ENCODE measurements at regions of chr19 and their contacts with region 1.

Region 1: GRCh38 chr19:2151339-2152229 is at the start of gene AP3D1:
- DNase-seq: peak; percentile 100
- H3K4me3 Mint-ChIP-seq: peak within 1 kb of the TSS; percentile 82
- H3K27ac Mint-ChIP-seq: peak within 1 kb of the TSS; percentile 82
- H3K4me1 Mint-ChIP-seq: peaks cover 43% of the 10 kb centered on the region
- H3K27me3 Mint-ChIP-seq: no peaks in the 10 kb centered on the region
- total RNA-seq, gene AP3D1: 84.6 to 89.1 TPM

Region 2: DNA sequence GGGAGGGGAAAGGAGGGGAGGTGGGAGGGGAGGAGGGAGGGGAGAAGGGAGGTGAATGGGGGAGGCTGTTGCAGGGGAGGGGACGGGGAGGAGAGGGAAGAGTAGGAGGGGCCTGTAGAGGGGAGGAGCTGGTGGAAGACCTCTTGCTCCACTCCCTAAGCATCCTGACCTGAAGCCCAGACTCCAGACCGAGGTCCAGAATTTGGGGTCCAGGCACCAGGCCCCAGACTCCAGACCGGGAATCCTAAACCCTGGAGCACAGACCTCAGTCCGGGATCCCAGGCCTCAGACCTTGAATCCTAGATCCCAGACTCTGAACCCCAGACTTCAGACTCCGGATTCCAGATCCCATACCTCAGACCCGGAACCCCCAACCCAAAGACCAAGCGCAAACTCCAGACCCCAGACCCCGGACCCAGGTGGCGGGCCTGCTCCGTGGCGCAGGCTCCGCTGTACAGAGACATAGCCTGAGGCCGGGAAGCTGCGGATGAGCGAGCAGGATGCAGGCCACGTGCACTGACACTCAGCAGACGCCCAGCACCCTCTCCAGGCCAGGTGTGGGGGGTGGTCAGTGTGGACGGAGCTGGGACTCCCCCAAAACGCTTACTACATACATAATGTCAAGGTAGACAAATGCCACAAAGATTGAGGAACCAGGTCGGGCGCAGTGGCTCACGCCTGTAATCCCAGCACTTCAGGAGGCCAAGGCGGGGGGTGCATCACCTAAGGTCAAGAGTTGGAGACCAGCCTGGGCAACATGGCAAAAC is 135.4 kb before region 1 on chr19:
- CTCF ChIA-PET with region 1: interaction called, 5 read pairs
- POLR2A ChIA-PET with region 1: no interaction called
- intact Hi-C with region 1: loop called (anchors 1 kb)
- DNase-seq: peak; percentile 82
- H3K4me3 Mint-ChIP-seq: peak overlapping the region; percentile 60
- H3K27ac Mint-ChIP-seq: peak overlapping the region; percentile 28
- H3K4me1 Mint-ChIP-seq: peaks cover 15% of the 10 kb centered on the region
- H3K27me3 Mint-ChIP-seq: no peaks in the 10 kb centered on the region

Region 3: DNA sequence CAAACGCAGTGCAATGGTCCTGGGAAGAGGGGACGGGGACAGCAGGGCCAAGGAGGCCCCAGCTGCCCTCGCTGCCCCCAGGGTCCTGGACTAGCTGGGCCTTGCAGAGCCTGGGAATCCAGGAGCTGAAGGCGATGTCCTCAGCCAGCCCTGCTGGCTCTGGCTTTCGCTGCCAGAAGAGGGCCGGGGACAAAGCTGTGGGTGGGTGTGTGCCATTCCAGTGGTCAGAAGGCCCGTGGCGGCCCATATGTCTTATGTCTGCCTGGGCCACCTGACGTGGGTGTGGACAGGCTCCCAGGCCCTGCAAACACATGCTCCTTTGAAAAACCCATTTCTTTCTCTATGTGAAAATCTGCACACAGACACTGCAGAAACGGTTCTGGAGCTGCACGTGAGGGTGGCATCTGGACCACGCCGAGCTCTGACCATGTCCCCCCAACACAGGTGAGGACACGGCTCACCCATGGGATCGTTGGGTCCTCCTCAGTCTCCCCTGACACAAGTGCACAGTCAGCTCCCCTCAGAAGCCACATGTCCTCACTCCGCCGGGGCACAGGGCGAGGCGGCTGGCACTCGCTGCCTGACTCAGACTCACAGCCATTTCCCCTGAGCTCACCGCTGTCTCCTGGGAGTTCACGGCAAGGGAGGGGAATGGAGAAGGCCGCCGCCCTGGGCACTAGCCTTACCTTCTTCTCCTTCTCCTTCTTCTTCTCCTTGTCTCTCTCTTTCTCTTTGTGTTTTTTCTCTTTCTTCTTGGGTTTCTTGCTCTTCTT is 38.0 kb before region 1 on chr19:
- CTCF ChIA-PET with region 1: no interaction called
- POLR2A ChIA-PET with region 1: no interaction called
- intact Hi-C with region 1: no loop called
- DNase-seq: no peak
- H3K4me3 Mint-ChIP-seq: no peak overlapping the region
- H3K27ac Mint-ChIP-seq: no peak overlapping the region
- H3K4me1 Mint-ChIP-seq: peaks cover 5% of the 10 kb centered on the region
- H3K27me3 Mint-ChIP-seq: no peaks in the 10 kb centered on the region

Region 4: GRCh38 chr19:2168619-2169424 is 17.2 kb after region 1 on chr19:
- CTCF ChIA-PET with region 1: interaction called, 14 read pairs
- POLR2A ChIA-PET with region 1: interaction called, 7 read pairs
- intact Hi-C with region 1: no loop called
- DNase-seq: peak; percentile 93
- H3K4me3 Mint-ChIP-seq: peak overlapping the region; percentile 38
- H3K27ac Mint-ChIP-seq: peak overlapping the region; percentile 84
- H3K4me1 Mint-ChIP-seq: peaks cover 68% of the 10 kb centered on the region
- H3K27me3 Mint-ChIP-seq: no peaks in the 10 kb centered on the region

Region 5: DNA sequence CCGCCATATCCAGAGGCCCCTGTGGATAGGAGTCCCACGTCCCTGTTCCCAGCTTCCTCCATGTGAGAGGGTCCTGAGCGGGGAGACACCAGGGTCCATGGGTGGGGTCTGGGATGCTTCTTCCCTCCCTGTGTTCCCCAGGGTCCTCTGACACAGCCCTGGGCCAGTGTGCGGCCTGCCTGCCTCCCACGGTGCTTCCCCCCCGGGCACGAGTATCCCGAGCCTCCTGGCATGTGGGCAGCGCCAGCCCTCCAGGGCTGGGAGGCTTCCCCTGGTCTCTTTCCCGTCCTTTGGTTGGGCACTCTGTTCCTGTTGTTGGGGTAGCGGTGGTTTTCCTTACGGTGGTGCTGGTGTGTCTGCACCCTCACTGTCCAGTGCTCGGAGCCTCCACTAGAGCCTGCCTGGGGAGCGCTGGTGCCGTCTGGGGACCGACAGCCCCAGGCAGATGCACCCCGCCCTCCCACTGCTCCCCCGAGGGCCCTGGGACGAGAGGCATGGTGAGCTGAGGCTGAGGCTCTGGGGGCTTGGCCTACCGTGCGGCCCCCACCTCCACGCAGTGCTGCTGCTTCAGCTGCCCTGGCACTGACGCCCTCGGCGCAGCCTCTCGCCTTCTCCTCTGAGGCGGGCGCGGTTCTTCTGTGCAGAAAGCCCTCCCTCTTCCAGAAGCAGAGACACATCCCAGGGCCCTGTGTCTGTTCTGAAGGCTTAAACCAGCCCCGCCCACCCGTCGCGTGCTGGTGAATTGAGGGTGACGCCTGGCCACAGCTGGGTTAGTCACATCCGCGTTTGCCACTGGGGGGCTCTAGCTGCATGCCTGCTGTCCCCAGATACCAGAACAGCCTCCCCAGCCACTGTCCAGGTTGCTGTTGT is 56.6 kb after region 1 on chr19:
- CTCF ChIA-PET with region 1: no interaction called
- POLR2A ChIA-PET with region 1: no interaction called
- intact Hi-C with region 1: no loop called
- DNase-seq: peak; percentile 35
- H3K4me3 Mint-ChIP-seq: no peak overlapping the region
- H3K27ac Mint-ChIP-seq: no peak overlapping the region
- H3K4me1 Mint-ChIP-seq: no peaks in the 10 kb centered on the region
- H3K27me3 Mint-ChIP-seq: no peaks in the 10 kb centered on the region

Region 6: DNA sequence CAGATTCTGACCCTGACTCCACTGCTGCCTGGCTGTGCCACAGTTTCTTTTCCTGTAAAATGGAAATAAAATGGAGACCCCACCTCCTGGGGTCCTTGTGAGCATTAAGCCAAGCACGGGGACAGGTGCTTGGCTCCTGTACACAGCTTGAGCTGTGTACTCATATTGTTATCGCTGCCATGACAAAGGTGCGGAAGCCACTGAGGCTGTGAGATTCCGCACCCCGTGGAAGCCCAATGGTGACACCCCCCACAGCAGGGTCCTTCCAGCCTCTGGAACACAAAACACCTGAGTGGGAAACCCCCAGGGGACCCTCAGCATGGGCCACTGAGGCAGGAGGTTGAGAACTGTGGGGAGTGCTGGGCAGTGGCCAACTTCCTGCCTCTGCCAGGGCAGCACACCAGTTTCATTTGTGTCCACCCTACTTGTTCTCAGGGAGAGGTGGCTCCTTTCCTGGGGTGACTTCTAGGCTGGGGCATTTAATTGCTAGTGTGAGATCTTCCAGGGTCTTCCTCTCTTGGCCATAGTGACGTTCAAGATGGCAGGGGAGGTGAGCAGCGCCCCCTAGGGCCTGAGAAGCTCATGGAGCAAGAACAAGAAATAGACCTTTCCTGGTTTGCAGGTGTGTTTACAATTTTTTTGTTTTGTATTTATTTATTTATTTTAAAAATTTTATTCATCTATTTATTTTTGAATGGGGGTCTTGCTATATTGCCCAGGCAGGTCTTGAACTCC is 110.0 kb after region 1 on chr19:
- CTCF ChIA-PET with region 1: interaction called, 10 read pairs
- POLR2A ChIA-PET with region 1: no interaction called
- intact Hi-C with region 1: no loop called
- DNase-seq: peak; percentile 82
- H3K4me3 Mint-ChIP-seq: no peak overlapping the region
- H3K27ac Mint-ChIP-seq: no peak overlapping the region
- H3K4me1 Mint-ChIP-seq: peaks cover 31% of the 10 kb centered on the region
- H3K27me3 Mint-ChIP-seq: no peaks in the 10 kb centered on the region

Region 7: DNA sequence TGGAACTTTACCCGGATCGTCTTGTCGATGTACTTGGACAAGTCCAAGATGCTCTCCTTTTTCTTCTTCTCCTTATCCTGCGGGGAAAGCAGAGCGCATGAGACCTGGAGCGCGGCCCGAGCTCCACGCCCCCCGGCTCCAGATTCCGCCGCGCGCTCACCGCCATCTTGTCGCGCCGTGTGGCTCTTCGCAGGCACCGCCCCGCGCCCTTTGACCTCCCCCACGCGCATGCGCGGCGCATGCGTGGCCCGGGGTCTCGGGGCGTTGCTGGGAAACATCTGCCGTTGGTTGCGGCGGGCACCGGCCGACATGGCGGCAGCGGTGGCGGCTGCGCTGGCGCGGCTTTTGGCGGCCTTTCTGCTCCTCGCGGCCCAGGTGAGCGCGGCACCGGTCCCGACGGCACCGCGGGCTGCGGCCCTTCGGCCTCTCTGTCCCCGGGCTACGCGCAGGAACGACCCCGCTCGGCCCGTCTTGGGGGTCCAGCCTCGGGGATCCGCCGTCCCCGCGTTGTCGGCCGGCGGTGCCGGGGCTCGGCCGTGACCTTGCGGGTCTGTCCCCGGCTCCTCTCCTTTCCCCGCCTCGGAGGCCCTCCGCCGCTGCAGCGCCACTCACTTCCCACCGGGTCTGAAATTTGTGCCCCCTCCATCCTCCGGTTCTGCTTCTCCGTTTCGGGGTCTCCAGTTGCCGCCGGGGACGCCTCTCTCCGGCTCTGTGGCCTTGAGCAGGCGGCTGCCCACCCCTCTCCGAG is 177.0 kb after region 1 on chr19 and contains the starts of genes LSM7 and SPPL2B:
- CTCF ChIA-PET with region 1: no interaction called
- POLR2A ChIA-PET with region 1: no interaction called
- intact Hi-C with region 1: loop called (anchors 5 kb)
- DNase-seq: peak; percentile 94
- H3K4me3 Mint-ChIP-seq: peak within 1 kb of the TSS; percentile 99
- H3K27ac Mint-ChIP-seq: peak within 1 kb of the TSS; percentile 94
- H3K4me1 Mint-ChIP-seq: peaks cover 53% of the 10 kb centered on the region
- H3K27me3 Mint-ChIP-seq: no peaks in the 10 kb centered on the region
- total RNA-seq, gene LSM7: 137 to 144 TPM
- total RNA-seq, gene SPPL2B: 43.8 TPM

Measured in activated CD4-positive, alpha-beta memory T cell treated with anti-CD3 and anti-CD28 coated beads for 36 hours (primary cell).